ENCODE measurements at regions of chr19 and their contacts with region 1.

Region 1: DNA sequence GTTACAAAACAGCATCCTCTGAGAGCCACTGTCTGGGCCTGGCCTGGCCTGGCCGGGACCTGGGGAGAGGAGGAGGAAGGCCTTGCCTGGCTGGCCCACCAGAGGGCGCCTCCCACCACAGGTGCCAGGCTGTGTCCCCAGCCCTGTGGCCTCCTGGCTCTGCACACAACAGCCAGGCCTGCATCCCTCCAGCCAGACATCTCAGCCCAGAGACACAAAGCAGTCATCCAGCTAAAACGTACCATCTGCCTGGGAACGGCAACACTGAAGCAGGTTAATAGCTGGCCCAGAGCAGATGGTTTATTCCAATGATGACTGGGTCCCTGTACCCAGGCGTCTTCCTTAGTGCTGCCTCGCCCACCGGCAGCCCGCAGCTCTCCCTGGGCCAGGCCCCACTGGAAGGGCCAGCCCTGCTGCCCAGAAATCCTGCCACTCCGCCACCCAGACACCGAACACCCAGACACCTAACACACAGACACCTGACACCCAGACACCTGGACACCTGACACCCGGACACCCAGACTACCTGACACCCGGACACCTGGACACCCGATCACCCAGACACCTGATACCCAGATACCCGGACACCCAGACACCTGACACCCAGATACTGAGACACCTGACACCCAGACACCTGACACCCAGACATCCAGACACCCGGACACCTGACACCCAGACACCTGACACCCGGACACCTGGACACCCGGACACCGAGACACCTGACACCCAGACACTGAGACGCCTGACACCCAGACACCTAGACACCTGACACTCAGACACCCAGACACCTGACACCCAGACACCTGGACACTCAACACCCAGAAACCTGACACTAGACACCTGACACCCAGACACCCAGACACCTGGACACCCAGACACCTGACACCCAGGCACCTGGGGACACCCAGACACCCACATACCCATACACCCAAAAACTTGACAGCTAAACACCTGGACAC is 20.1 kb downstream of the C19orf12 start:
- DNase-seq: peak; percentile 90

Region 2: DNA sequence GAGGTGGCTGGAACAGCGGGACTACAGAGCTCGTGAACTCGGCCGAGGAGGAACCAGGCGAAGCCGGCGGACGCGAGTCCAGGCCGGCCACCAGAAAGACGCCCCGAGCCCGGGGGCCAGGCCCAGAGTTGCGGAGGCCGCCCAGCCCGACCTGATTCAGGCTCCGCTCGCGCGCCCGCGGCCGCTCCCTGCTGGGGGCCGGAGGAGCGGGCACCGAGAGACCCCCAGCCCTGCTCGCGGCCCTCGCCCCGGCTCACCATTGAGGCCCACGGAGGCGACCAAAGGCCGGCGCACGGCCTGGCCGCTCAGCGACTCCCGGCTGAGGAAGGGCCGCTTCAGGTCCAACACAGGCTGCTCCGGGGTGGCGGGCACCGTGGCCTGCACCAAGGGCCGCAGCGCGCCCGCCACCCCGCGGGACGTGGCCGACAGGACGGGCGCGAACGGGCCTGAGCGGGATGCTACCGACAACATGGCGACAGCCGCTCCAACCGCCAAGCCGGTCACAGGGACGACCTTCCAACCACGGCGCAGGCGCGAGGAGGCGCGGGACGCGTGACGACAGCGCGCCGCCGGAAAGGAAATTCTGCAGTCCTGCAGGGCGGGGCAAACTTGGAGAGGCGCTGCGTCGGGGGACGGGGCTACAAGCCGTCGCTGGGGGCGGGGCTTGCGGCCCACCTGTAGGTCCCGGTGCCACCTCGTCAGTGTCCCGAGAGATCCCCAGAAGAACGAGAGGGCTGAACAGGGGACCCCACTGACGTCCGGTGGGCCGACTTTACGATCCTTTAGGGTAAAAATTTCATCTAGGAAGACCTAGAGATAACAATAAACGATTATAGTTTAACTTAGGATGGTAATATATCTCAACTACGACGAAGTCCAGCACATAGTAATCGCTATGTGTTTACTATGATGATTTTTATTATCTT is 482.0 kb before region 1 on chr19 and contains the start of gene UQCRFS1:
- in situ Hi-C with region 1: loop called (anchors 25 kb)
- DNase-seq: peak; percentile 91

Measured in KBM-7 (cell line).